ENCODE measurements at regions of chr6 and their contacts with region 1.

Region 1: GRCh38 chr6:1311400-1312202 is at the start of gene FOXQ1:
- DNase-seq: peak in 1 of 2 donors; percentile 55
- ATAC-seq: peak in 3 of 4 donors; percentile 28 to 57 (median 36)
- H3K4me3 ChIP-seq: peak within 1 kb of the TSS; percentile 63
- H3K27ac ChIP-seq: no peak within 1 kb of the TSS
- H3K4me1 ChIP-seq: peaks cover 4% of the 10 kb centered on the region
- H3K27me3 ChIP-seq: peaks cover 19 to 83% (median 28%) of the 10 kb centered on the region in 3 donors
- CTCF ChIP-seq: no peak
- total RNA-seq, gene FOXQ1: not detected

Region 2: DNA sequence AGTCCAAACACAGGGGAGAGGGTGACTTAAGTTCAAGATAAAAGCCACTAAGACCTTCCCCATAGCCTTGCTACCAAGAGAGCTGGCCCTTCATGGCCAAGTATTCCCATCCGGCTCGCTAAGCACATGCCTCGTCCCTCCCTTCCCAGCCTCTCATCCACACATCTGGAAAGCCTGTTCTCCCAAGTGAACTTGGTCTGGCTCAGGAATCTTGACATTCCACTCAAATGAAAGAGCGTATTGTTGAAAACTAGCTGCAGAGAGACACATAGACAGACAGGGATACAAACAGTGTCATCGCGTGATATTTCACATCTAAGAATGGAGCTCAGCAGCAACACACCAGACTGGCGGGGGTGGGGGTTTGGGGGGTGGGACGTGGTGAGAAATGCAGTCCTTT is 182.5 kb before region 1 on chr6:
- intact Hi-C with region 1: loop called in 1 of 2 experiments (anchors 10 kb)
- DNase-seq: no peak
- ATAC-seq: peak in 1 of 4 donors; percentile 56
- H3K4me3 ChIP-seq: no peak overlapping the region
- H3K27ac ChIP-seq: no peak overlapping the region
- H3K4me1 ChIP-seq: no peaks in the 10 kb centered on the region
- H3K27me3 ChIP-seq: no peaks in the 10 kb centered on the region
- CTCF ChIP-seq: no peak

Region 3: GRCh38 chr6:1424306-1424928 is 112.8 kb after region 1 on chr6:
- intact Hi-C with region 1: no loop called
- DNase-seq: peak in 1 of 2 donors; percentile 28
- ATAC-seq: peak in 3 of 4 donors; percentile 58 to 65 (median 63)
- H3K4me3 ChIP-seq: no peak overlapping the region
- H3K27ac ChIP-seq: no peak overlapping the region
- H3K4me1 ChIP-seq: no peaks in the 10 kb centered on the region
- H3K27me3 ChIP-seq: peaks cover 0 to 4% (median 2%) of the 10 kb centered on the region in 3 donors
- CTCF ChIP-seq: peak; percentile 43

Region 4: DNA sequence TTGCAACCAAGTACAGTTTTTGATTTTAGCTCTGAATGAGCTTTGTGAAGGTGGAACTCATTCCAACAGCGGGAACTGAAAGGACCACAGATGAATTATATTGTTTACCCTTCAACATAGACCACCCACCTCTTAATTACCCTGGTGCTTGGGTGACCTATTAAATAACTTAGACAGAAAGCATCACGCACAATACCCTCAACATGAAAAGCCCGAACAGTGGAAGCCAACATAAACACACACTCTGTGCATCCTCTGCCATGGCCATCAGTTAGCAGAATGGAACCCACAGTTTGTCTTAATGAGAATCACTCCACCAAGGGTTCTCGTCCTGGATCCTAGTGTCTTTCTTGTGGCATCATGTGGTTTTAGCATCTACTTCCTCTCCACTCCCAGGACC is 138.3 kb after region 1 on chr6:
- intact Hi-C with region 1: no loop called
- DNase-seq: no peak
- ATAC-seq: no peak
- H3K4me3 ChIP-seq: no peak overlapping the region
- H3K27ac ChIP-seq: no peak overlapping the region
- H3K4me1 ChIP-seq: no peaks in the 10 kb centered on the region
- H3K27me3 ChIP-seq: peaks cover 0 to 7% (median 2%) of the 10 kb centered on the region in 3 donors
- CTCF ChIP-seq: no peak

Measured in psoas muscle (tissue), 8 donors.